ENCODE measurements at regions of chr12 and their contacts with region 1.

Region 1: DNA sequence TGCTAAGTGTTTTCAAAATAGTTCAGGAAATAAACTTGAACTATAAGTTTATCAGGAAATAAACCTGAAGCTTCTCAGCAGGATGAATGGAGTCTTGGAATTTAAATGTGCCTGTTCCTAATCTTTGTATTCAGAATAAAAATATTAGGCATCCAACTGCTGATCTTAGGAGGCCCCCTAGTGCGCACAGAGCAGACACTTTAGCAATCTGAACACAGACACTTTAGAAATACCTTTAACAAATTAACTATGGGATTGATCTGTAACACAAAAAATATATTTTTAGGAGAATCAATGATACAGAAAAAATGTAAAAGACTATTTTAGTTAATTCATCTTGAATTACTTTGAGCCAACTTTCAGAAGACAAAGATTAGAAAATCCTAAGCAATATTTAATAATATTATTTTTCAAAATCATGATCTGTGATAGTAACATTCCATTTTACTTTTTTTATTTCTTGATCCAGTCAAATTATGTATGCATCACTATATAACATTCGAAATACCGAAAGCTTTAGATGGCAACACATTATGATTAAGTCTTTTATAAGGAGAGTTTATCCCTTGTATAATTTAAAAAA is 80.9 kb downstream of the SLC41A2 start:
- ATAC-seq: peak in 5 of 8 experiments; percentile 37 to 84 (median 69)
- H3K4me3 ChIP-seq: no peak overlapping the region
- H3K27ac ChIP-seq: no peak overlapping the region
- H3K4me1 ChIP-seq: no peaks in the 10 kb centered on the region

Region 2: GRCh38 chr12:104177663-104178501 is 699.3 kb before region 1 on chr12:
- in situ Hi-C with region 1: loop called in 1 of 9 experiments (anchors 25 kb)
- ATAC-seq: peak in 3 of 8 experiments; percentile 81 to 93 (median 89)
- H3K4me3 ChIP-seq: no peak overlapping the region
- H3K27ac ChIP-seq: no peak overlapping the region
- H3K4me1 ChIP-seq: no peaks in the 10 kb centered on the region

Region 3: GRCh38 chr12:104802198-104802597 is 75.0 kb before region 1 on chr12:
- in situ Hi-C with region 1: no loop called
- ATAC-seq: no peak
- H3K4me3 ChIP-seq: no peak overlapping the region
- H3K27ac ChIP-seq: no peak overlapping the region
- H3K4me1 ChIP-seq: no peaks in the 10 kb centered on the region

Measured in motor neuron (in vitro differentiated cells).